Adrenal gland (tissue), 19 donors: ENCODE measurements at regions of chr1 and their contacts with region 1.

Region 1: DNA sequence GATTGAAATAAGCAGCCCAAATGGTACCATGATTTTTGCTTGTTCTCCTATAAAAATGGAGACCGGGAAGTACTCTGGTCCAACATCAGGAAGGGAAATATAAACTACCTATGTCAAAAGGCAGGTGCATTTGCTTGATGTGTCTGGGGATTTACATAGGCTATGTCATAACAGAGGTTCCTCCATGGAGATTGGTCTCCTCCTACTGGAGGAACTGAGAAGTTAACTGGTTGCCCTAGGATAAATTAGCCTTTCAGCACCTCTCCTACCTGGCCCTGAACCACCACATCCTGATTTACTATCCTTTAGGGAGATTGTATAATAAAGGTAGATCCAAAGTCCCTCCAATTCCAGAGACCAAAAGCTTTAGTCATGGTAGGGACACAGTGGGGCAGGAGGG is 1109.3 kb upstream of the B3GALT2 start:
- DNase-seq: peak in 3 of 7 donors; percentile 5 to 17 (median 7)
- H3K4me3 ChIP-seq: no peak overlapping the region
- H3K27ac ChIP-seq: no peak overlapping the region
- H3K4me1 ChIP-seq: no peaks in the 10 kb centered on the region
- H3K27me3 ChIP-seq: no peaks in the 10 kb centered on the region
- CTCF ChIP-seq: peak; percentile 43 to 67 (median 58)
- POLR2A ChIP-seq: no peak

Region 2: GRCh38 chr1:193183019-193183627 is 1112.6 kb before region 1 on chr1:
- intact Hi-C with region 1: loop called in 1 of 2 experiments (anchors 10 kb)
- DNase-seq: no peak
- H3K4me3 ChIP-seq: no peak overlapping the region
- H3K27ac ChIP-seq: no peak overlapping the region
- H3K4me1 ChIP-seq: peaks cover 0 to 67% of the 10 kb centered on the region in 2 donors
- H3K27me3 ChIP-seq: no peaks in the 10 kb centered on the region
- CTCF ChIP-seq: peak; percentile 54 to 87 (median 76)
- POLR2A ChIP-seq: no peak

Region 3: GRCh38 chr1:194133163-194133562 is 162.5 kb before region 1 on chr1:
- intact Hi-C with region 1: no loop called
- DNase-seq: no peak
- H3K4me3 ChIP-seq: no peak overlapping the region
- H3K27ac ChIP-seq: no peak overlapping the region
- H3K4me1 ChIP-seq: no peaks in the 10 kb centered on the region
- H3K27me3 ChIP-seq: no peaks in the 10 kb centered on the region
- CTCF ChIP-seq: no peak
- POLR2A ChIP-seq: no peak